Mammary epithelial cell (primary cell): ENCODE measurements at regions of chr6 and their contacts with region 1.

Region 1: DNA sequence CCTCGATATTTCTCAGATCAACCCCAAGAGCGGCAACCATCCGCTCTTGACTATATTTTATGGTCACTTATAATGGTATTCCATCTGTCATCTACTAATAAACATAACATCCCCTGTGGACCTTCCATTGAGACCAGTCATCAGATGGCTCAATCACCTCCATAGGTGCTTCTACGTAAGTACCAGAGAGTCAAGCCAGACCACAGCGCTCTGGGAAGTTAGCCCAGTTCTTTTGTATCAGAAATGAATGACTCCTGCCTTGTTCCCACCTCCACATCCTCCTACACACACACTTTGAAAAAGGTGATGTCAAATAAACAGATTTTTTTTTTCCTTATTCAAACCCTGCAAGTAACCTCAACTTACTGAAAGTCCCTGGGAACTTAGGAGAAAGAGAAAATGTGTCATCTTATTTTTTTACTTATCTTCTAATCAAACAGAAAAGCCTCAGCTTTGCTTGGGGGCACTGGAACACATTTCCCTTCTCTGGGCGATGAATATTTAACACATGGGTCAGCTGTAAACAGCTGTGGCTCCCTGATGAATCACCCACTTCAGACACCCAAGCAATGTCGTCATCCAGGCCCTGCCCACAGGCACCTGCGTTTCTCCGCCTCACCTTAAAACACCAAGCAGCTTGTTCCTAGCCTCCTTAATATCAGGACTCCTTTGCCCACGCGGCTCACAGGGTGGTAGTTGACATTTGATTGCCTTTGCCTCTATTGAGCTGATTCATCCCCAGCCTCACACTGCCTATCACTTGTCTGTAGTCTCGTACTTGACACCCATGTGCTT is 121.4 kb upstream of the LY86 start:
- DNase-seq: peak; percentile 94
- H3K4me3 ChIP-seq: no peak overlapping the region
- H3K27ac ChIP-seq: peak overlapping the region; percentile 67
- H3K4me1 ChIP-seq: peaks cover 30% of the 10 kb centered on the region
- H3K27me3 ChIP-seq: no peaks in the 10 kb centered on the region
- CTCF ChIP-seq: no peak

Region 2: DNA sequence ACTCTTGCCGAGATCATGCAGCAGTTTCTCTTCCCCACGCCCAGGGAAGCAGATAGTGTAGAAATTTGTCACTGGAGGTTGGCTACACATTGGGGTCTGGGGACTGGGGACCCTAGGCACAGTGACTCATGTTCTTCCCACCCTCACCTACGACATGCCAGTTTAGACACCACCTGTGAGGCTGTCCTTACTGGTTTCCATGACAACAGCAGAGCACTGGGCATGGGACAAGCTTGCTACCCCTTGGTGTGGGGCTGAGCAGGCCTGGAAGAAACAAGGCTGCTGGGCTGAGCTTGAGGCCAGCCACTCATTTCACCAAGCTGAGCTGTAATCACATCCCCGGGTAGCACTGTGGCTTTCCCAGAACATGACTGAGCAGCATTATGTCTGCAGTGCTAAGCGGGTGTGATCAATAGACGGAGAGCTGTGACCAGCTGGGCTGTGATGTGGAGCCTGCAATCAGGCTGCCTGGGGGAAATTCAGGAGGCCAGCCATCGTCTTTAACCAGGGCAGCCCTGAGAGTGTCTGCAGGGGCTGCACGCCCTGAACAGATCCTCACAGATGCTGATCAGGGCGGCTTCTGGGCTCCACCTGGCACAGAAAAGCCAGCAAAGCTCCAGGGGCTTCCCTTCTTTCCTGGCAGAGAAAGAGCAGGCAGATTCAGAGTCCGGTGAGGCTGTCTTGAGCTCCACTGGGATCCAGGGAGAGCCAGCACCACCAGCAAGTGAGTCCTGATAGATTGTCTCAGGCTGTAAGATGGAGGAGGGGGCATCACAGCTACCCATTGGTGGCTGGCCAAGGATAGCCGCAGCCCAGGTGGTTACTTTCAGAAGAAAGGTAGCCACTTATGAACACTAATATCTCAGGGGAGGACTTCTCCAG is 626.4 kb before region 1 on chr6:
- CTCF ChIA-PET with region 1: no interaction called
- dilution Hi-C with region 1: no loop called
- in situ Hi-C with region 1: no loop called
- intact Hi-C with region 1: no loop called
- DNase-seq: no peak
- H3K4me3 ChIP-seq: no peak overlapping the region
- H3K27ac ChIP-seq: no peak overlapping the region
- H3K4me1 ChIP-seq: no peaks in the 10 kb centered on the region
- H3K27me3 ChIP-seq: peaks cover 4% of the 10 kb centered on the region
- CTCF ChIP-seq: no peak

Region 3: DNA sequence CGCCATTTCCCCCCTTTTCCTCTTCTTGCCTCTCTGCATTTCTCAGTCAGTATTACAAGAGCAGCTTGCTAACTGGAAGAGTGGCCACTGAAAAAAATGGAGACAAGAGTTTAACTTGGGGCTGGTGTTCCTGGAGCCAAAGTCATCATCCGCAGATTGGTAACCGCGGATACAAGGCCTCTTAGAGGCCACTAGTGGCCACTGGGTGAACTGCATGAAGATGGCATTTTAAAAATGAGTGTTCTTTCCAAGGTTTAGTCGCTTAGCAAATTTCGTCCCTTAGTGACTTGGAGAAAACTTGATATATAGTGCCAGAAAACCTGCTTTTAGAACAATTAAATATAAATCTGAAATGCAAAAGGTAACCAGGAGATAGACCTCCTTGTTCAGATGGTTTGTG is 151.5 kb before region 1 on chr6:
- CTCF ChIA-PET with region 1: no interaction called
- dilution Hi-C with region 1: no loop called
- in situ Hi-C with region 1: no loop called
- intact Hi-C with region 1: loop called (anchors 5 kb)
- DNase-seq: peak; percentile 20
- H3K4me3 ChIP-seq: no peak overlapping the region
- H3K27ac ChIP-seq: no peak overlapping the region
- H3K4me1 ChIP-seq: peaks cover 3% of the 10 kb centered on the region
- H3K27me3 ChIP-seq: peaks cover 17% of the 10 kb centered on the region
- CTCF ChIP-seq: peak; percentile 72 to 86

Region 4: GRCh38 chr6:6395581-6396197 is 71.5 kb before region 1 on chr6:
- CTCF ChIA-PET with region 1: no interaction called
- dilution Hi-C with region 1: no loop called
- in situ Hi-C with region 1: no loop called
- intact Hi-C with region 1: loop called (anchors 5 kb)
- DNase-seq: no peak
- H3K4me3 ChIP-seq: no peak overlapping the region
- H3K27ac ChIP-seq: no peak overlapping the region
- H3K4me1 ChIP-seq: no peaks in the 10 kb centered on the region
- H3K27me3 ChIP-seq: no peaks in the 10 kb centered on the region
- CTCF ChIP-seq: no peak

Region 5: DNA sequence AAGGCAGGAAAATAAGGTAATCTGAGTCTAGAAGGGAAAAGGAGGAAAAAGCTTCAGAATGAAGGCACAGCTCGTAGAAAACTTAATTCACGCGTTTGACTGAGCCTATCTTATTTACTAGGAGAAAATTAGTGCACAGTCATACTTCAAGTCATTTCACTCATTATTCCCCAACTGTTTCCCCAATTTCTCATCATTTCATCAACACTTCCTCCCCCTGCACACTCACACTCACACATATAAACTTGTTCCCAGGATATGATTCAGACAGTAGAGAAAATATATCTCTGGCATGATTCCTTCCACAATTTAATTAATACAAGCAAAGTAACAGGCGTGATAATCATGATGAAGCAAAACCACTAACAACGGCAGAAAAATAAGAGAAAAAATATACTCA is 52.2 kb before region 1 on chr6:
- CTCF ChIA-PET with region 1: no interaction called
- dilution Hi-C with region 1: no loop called
- in situ Hi-C with region 1: no loop called
- intact Hi-C with region 1: loop called (anchors 2 kb)
- DNase-seq: peak; percentile 35
- H3K4me3 ChIP-seq: no peak overlapping the region
- H3K27ac ChIP-seq: no peak overlapping the region
- H3K4me1 ChIP-seq: peaks cover 3% of the 10 kb centered on the region
- H3K27me3 ChIP-seq: no peaks in the 10 kb centered on the region
- CTCF ChIP-seq: no peak

Region 6: DNA sequence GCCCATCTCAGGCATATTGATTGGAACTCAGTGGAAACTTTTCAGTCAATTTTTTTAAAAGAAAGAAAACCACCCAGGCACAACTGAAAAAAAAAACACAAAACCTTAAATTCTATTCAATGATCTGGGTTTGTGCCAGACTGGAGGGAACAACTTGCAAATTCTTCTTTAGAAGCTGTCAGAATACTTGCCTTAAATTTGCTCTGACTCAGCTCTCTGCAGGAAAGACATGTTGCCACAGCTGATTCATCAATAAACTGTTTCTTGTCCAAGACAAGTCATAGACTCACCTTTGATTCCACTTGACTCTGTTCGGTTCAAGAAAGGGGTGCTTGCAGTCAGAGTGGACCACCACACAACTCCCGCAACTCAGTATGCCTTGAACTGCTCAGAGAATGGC is 28.9 kb before region 1 on chr6:
- CTCF ChIA-PET with region 1: no interaction called
- dilution Hi-C with region 1: no loop called
- in situ Hi-C with region 1: no loop called
- intact Hi-C with region 1: loop called (anchors 1 kb)
- DNase-seq: peak; percentile 61
- H3K4me3 ChIP-seq: no peak overlapping the region
- H3K27ac ChIP-seq: no peak overlapping the region
- H3K4me1 ChIP-seq: peaks cover 23% of the 10 kb centered on the region
- H3K27me3 ChIP-seq: no peaks in the 10 kb centered on the region
- CTCF ChIP-seq: no peak

Region 7: DNA sequence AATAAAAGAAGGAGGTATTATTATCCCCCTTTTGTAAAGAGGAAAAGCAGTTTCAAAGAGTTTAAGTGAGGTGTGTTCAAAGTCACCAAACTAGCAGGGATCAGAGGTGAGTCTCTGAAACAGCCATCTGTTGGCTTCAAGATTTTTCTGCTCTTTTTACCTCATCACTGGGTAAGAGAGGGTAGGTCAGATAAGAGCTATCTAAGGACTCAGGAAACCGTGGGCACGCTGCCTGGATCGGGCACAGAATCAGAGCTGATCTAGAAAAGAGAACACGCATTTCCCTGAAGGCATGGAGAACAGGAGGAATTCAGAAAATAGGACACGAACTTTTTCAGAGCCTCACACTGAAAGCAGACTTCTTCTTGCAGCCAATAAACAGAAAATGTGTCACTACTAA is 55.5 kb after region 1 on chr6:
- CTCF ChIA-PET with region 1: no interaction called
- dilution Hi-C with region 1: no loop called
- in situ Hi-C with region 1: no loop called
- intact Hi-C with region 1: no loop called
- DNase-seq: no peak
- H3K4me3 ChIP-seq: no peak overlapping the region
- H3K27ac ChIP-seq: no peak overlapping the region
- H3K4me1 ChIP-seq: no peaks in the 10 kb centered on the region
- H3K27me3 ChIP-seq: no peaks in the 10 kb centered on the region
- CTCF ChIP-seq: no peak

Region 8: GRCh38 chr6:6584310-6585002 is 117.3 kb after region 1 on chr6:
- CTCF ChIA-PET with region 1: no interaction called
- dilution Hi-C with region 1: no loop called
- in situ Hi-C with region 1: no loop called
- intact Hi-C with region 1: no loop called
- DNase-seq: no peak
- H3K4me3 ChIP-seq: no peak overlapping the region
- H3K27ac ChIP-seq: no peak overlapping the region
- H3K4me1 ChIP-seq: no peaks in the 10 kb centered on the region
- H3K27me3 ChIP-seq: peaks cover 3% of the 10 kb centered on the region
- CTCF ChIP-seq: no peak